ENCODE measurements at regions of chr7 and their contacts with region 1.

Region 1: DNA sequence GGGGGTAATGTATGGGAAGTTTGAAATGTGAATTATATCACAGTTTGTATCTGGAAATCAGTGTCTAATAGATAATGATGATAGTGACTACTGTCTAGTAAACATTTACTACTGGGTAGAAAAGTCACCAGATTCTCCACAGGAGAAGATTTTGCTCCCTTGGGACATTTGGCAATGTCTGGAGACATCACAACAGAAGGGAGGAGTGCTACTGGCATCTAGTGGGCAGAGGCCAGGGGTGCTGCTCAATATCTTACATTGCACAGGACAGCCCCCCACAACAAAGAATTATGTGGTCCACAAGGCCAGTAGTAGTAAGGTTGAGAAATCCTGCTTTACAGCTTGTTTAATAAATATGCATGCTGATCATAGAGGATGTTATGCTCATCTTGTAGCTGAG is 92.3 kb upstream of the PRPS1L1 start:
- DNase-seq: peak; percentile 50
- H3K4me3 Mint-ChIP-seq: no peak overlapping the region
- H3K27ac Mint-ChIP-seq: no peak overlapping the region
- H3K4me1 Mint-ChIP-seq: peaks cover 13% of the 10 kb centered on the region
- H3K27me3 Mint-ChIP-seq: no peaks in the 10 kb centered on the region
- CTCF ChIP-seq: peak; percentile 43

Region 2: GRCh38 chr7:17488829-17489228 is 631.2 kb before region 1 on chr7:
- CTCF ChIA-PET with region 1: no interaction called
- intact Hi-C with region 1: no loop called
- DNase-seq: no peak
- H3K4me3 Mint-ChIP-seq: no peak overlapping the region
- H3K27ac Mint-ChIP-seq: no peak overlapping the region
- H3K4me1 Mint-ChIP-seq: no peaks in the 10 kb centered on the region
- H3K27me3 Mint-ChIP-seq: no peaks in the 10 kb centered on the region
- CTCF ChIP-seq: no peak

Region 3: DNA sequence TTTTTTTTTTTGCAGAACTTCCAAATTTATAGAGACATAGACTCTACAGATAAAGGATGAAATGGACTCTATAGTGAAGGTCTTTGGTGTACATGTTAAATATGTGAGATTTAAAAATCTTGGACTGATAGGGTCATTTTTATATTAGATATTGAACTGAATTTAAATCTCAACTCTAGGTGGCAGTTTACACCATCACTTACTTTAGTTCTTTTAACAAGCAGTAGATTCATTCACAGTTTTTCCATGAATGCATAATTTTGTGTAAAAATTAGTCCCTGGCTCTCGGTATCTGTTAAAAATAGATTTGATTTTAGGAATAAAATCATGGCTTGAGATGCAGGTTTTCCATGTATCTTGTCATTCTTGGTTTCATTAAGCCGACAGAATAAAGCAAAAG is 148.6 kb before region 1 on chr7:
- CTCF ChIA-PET with region 1: no interaction called
- intact Hi-C with region 1: loop called (anchors 1 kb)
- DNase-seq: no peak
- H3K4me3 Mint-ChIP-seq: no peak overlapping the region
- H3K27ac Mint-ChIP-seq: no peak overlapping the region
- H3K4me1 Mint-ChIP-seq: peaks cover 12% of the 10 kb centered on the region
- H3K27me3 Mint-ChIP-seq: no peaks in the 10 kb centered on the region
- CTCF ChIP-seq: peak; percentile 12

Region 4: DNA sequence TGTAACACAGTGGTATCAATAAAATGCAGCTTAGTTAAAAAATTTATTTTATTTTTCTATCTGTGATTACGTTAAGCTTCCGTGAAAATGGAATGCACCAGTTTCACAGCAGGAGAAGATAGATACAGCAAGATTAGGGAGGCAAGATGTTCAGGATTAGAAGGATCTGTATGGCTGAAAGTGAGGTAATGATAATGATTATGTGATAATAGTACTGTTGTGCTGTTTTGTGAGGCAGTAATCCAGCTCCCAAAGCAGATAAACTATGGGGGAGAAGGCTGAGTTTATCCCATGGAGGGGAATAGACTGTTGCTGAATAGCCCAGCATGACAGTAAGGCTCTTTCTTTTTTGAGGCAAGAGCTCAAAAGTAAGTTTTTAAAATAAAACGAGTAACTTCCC is 123.7 kb after region 1 on chr7:
- CTCF ChIA-PET with region 1: no interaction called
- intact Hi-C with region 1: no loop called
- DNase-seq: no peak
- H3K4me3 Mint-ChIP-seq: no peak overlapping the region
- H3K27ac Mint-ChIP-seq: no peak overlapping the region
- H3K4me1 Mint-ChIP-seq: no peaks in the 10 kb centered on the region
- H3K27me3 Mint-ChIP-seq: no peaks in the 10 kb centered on the region
- CTCF ChIP-seq: no peak